Activated T-helper 1 cell treated with anti-CD3 and anti-CD28 coated beads, Interleukin-12 subunit alpha, Interleukin-12 subunit beta, Interleukin-2, Interleukin-4 antibody, amounts not matched to agents 30 ng/mL and 10 ng/mL and 1 ng/mL, durations not matched to agents 14 hours and 24 hours and 36 hours (primary cell): ENCODE measurements at regions of chrX and their contacts with region 1.

Region 1: GRCh38 chrX:46279925-46280313 is 265.3 kb downstream of the ZNF674 start:
- DNase-seq: no peak
- H3K4me3 Mint-ChIP-seq: no peak overlapping the region
- H3K27ac Mint-ChIP-seq: peak overlapping the region; percentile 23
- H3K4me1 Mint-ChIP-seq: peaks cover 20% of the 10 kb centered on the region
- H3K27me3 Mint-ChIP-seq: no peaks in the 10 kb centered on the region

Region 2: GRCh38 chrX:46319750-46320149 is 39.8 kb after region 1 on chrX:
- intact Hi-C with region 1: loop called (anchors 1 kb)
- DNase-seq: no peak
- H3K4me3 Mint-ChIP-seq: no peak overlapping the region
- H3K27ac Mint-ChIP-seq: peak overlapping the region; percentile 76
- H3K4me1 Mint-ChIP-seq: peaks cover 47% of the 10 kb centered on the region
- H3K27me3 Mint-ChIP-seq: no peaks in the 10 kb centered on the region

Region 3: DNA sequence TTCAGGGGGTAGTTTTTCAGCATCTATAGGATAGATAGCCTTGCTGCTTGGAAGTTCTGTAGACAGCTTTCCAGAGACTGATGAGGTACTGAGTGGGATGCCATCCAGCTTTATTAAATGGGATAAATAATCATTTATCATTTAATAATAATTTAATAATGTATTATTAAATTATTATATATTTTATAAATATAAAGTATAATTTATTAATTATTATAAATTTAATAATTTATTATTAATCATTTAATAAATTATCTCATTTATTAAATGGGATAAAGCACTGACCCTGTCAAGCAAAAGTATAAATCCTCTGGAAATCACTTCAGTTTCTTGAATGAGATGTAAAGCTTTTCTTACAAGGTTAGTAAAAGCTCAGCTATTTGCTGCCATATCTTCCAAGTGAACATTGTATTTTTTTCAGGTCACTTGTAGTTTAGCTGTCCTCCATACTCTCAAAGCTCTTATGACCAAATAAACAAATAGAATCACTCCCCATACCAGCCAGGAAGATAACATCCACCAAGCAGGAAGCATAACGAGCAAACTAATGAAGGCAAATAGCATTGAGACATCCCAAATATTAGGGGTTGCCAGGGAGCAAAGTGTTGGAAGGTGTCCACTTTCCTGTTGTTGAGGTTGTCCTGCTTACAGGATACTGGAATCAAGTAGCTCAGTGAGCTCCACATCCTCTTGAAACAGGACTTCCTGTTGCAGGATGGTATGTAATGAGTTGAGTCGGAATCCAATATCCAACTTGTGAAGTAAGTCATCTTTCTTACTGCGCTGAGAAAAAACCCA is 176.4 kb after region 1 on chrX:
- intact Hi-C with region 1: no loop called
- DNase-seq: no peak
- H3K4me3 Mint-ChIP-seq: no peak overlapping the region
- H3K27ac Mint-ChIP-seq: no peak overlapping the region
- H3K4me1 Mint-ChIP-seq: peaks cover 5% of the 10 kb centered on the region
- H3K27me3 Mint-ChIP-seq: no peaks in the 10 kb centered on the region